ENCODE measurements at regions of chrX and their contacts with region 1.

Region 1: DNA sequence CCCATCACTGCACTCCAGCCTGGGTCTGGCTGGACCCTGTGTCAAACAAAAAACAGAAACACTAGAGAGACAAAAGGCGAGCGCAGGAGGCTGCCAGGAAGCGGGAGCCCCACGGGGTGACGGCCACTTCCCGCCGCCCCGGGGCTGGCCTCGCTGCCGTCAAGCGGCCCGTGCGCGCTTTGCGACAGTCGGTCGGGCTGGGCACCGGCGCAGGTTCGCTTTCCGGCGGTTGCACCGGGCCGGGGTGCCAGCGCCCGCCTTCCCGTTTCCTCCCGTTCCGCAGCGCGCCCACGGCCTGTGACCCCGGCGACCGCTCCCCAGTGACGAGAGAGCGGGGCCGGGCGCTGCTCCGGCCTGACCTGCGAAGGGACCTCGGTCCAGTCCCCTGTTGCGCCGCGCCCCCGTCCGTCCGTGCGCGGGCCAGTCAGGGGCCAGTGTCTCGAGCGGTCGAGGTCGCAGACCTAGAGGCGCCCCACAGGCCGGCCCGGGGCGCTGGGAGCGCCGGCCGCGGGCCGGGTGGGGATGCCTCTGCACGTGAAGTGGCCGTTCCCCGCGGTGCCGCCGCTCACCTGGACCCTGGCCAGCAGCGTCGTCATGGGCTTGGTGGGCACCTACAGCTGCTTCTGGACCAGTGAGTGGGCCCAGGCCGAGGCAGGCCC is at the start of gene TAFAZZIN:
- DNase-seq: peak; percentile 65 to 80 (median 72)
- H3K4me3 ChIP-seq: peak within 1 kb of the TSS; percentile 43 to 80 (median 69)
- H3K27ac ChIP-seq: peak within 1 kb of the TSS; percentile 15 to 77
- H3K4me1 ChIP-seq: peaks cover 3 to 33% (median 32%) of the 10 kb centered on the region in 4 experiments
- H3K27me3 ChIP-seq: no peaks in the 10 kb centered on the region

Region 2: DNA sequence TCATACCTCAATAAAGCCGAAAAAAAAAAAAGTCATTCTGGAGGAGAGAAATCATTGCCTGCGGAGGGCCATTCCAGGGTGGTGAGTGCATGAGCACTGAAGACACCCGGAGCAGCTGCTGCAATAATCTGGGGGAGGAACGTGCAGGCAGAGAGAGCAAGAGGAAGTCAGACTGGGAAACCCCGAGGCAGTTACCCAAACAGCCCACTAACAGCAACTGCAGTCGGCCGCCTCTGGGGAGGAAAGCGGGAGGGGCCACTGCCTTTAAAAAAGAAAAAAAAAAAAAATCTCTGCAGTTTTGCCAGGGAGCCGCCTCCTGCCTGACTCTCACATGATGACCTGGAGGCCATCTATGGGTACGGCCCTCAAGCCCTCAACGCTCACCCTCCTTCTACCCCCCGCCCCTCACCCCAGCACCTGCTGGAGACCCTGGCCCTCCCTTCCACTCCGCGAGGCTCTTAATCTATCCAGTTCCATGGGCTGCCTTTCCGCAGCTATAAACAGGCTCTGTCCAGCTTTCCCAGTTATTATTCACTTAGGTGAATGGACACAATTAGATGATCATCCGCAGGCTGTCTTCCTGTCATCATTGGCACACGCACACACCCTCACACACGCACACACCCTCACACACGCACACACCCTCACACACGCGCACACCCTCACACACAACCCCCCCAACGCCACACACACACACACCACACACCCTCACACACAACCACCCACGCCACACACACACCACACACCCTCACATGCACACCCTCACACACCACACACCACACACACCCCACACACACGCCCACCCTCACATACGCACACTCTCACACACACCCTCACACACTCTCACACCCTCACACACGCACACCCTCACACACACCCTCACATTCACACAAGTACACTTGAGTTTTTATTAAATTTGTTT is 510.4 kb before region 1 on chrX:
- CTCF ChIA-PET with region 1: no interaction called
- POLR2A ChIA-PET with region 1: no interaction called
- DNase-seq: peak; percentile 75 to 91 (median 91)
- H3K4me3 ChIP-seq: peak overlapping the region in 2 of 7 experiments; percentile 1 to 4
- H3K27ac ChIP-seq: no peak overlapping the region
- H3K4me1 ChIP-seq: peaks cover 5 to 54% (median 46%) of the 10 kb centered on the region in 4 experiments
- H3K27me3 ChIP-seq: peaks cover 0 to 8% (median 0%) of the 10 kb centered on the region in 5 experiments

Region 3: GRCh38 chrX:154116426-154117211 is 294.8 kb before region 1 on chrX:
- CTCF ChIA-PET with region 1: no interaction called
- POLR2A ChIA-PET with region 1: no interaction called
- DNase-seq: no peak
- H3K4me3 ChIP-seq: no peak overlapping the region
- H3K27ac ChIP-seq: no peak overlapping the region
- H3K4me1 ChIP-seq: peaks cover 0 to 1% (median under 1%) of the 10 kb centered on the region in 4 experiments
- H3K27me3 ChIP-seq: peaks cover 0 to 6% (median 0%) of the 10 kb centered on the region in 5 experiments

Region 4: DNA sequence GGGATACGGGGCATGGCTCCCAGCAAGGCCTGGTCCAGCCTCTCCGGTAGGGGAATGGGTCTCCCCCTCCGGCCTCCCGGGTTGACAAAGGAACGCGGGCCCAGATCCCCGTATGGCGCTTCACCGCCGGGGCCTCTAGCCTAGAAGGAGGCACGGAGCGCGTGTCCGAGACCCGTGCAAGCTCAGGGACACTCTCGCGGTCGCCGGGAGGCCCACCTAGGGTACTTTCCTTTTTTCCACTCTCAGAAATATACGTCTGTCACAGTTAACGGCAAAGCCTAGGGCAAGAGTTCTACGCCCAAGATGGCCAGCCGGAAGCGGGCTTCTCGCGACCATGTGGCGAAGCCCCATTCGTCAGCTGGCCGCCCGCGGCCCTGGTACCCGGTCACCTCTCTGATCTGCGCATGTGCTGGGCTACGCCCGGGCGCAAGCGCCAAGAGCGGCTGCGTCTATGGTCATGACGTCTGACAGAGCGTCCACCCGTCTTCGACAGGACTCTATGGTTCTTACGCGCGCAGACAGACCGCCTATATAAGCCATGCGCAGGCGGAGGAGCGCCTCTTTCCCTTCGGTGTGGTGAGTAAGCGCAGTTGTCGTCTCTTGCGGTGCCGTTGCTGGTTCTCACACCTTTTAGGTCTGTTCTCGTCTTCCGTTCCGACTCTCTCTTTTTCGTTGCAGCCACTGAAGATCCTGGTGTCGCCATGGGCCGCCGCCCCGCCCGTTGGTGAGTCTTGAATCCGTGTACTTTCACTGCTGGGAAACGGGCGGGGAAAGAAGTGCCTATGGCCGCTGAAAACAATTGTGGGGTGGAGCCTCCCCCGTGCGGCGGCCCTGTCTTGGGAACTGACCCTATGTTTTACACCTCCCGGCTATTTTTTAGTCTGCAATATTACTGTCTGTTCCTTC is 13.4 kb before region 1 on chrX and contains the start of gene RPL10:
- CTCF ChIA-PET with region 1: interaction called, 4 read pairs
- POLR2A ChIA-PET with region 1: interaction called, 18 read pairs
- DNase-seq: peak; percentile 94 to 98 (median 97)
- H3K4me3 ChIP-seq: peak within 1 kb of the TSS; percentile 60 to 89 (median 77)
- H3K27ac ChIP-seq: peak within 1 kb of the TSS; percentile 94 to 97
- H3K4me1 ChIP-seq: peaks cover 0 to 22% (median 12%) of the 10 kb centered on the region in 4 experiments
- H3K27me3 ChIP-seq: no peaks in the 10 kb centered on the region

Region 5: GRCh38 chrX:154428176-154429010 is 16.9 kb after region 1 on chrX and contains the start of gene ATP6AP1:
- CTCF ChIA-PET with region 1: interaction called, 12 read pairs
- POLR2A ChIA-PET with region 1: interaction called, 3 read pairs
- DNase-seq: peak; percentile 89 to 94 (median 93)
- H3K4me3 ChIP-seq: peak within 1 kb of the TSS; percentile 49 to 84 (median 70)
- H3K27ac ChIP-seq: peak within 1 kb of the TSS in 1 of 2 experiments; percentile 74
- H3K4me1 ChIP-seq: peaks cover 0 to 47% (median 42%) of the 10 kb centered on the region in 4 experiments
- H3K27me3 ChIP-seq: peaks cover 0 to 4% (median 0%) of the 10 kb centered on the region in 5 experiments